Activated naive CD4-positive, alpha-beta T cell treated with anti-CD3 and anti-CD28 coated beads, Interleukin-2, amount 10 ng/mL, durations not matched to agents 7 days and 5 days (primary cell): ENCODE measurements at regions of chr1 and their contacts with region 1.

Region 1: DNA sequence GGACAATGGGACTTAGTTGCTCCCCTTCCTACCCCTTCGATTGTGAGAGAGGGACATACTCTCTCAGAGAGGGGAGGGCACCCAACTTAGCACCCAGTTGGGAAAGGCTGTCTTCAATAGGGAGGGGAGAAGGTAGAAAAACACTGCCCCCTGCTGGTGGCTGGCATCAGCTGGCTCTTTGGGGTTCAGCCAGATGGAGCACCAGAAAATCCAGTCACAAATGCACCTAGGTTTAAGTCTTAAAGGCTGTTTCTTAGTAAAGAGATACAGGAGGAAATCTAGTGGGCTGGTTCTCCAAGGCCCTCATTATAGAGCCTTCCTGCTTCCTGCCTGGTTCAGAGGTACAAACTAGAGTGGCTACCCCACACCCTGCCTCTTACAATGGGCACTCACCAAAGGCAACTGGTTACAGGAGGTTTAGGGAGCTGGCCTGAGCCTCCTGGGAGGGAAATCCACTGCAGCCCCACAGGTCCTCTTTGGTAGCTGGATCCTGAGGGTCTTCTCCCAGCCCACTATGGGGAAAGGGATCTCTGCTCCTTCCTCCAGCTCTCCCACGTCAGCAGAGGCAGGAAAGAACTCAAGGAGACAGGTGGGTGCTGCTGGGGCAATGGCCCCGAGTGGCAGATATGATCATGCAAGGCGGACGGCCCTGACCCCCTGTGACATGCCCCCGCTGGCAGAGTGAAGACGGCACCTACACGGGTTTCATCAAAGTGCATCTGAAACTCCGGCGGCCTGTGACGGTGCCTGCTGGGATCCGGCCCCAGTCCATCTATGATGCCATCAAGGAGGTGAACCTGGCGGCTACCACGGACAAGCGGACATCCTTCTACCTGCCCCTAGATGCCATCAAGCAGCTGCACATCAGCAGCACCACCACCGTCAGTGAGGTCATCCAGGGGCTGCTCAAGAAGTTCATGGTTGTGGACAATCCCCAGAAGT is 28.3 kb downstream of the EIF2D start:
- DNase-seq: peak; percentile 91
- H3K4me3 Mint-ChIP-seq: peak overlapping the region; percentile 56
- H3K27ac Mint-ChIP-seq: peak overlapping the region; percentile 95
- H3K4me1 Mint-ChIP-seq: peaks cover 89% of the 10 kb centered on the region
- H3K27me3 Mint-ChIP-seq: no peaks in the 10 kb centered on the region

Region 2: GRCh38 chr1:206469933-206470691 is 113.9 kb before region 1 on chr1 and contains the start of gene IKBKE:
- CTCF ChIA-PET with region 1: interaction called, 10 read pairs
- DNase-seq: peak; percentile 75
- H3K4me3 Mint-ChIP-seq: peak within 1 kb of the TSS; percentile 72
- H3K27ac Mint-ChIP-seq: peak within 1 kb of the TSS; percentile 67
- H3K4me1 Mint-ChIP-seq: peaks cover 88% of the 10 kb centered on the region
- H3K27me3 Mint-ChIP-seq: no peaks in the 10 kb centered on the region

Region 3: GRCh38 chr1:206489980-206490770 is 93.8 kb before region 1 on chr1:
- CTCF ChIA-PET with region 1: interaction called, 25 read pairs
- DNase-seq: peak; percentile 76
- H3K4me3 Mint-ChIP-seq: no peak overlapping the region
- H3K27ac Mint-ChIP-seq: peak overlapping the region; percentile 1
- H3K4me1 Mint-ChIP-seq: peaks cover 5% of the 10 kb centered on the region
- H3K27me3 Mint-ChIP-seq: no peaks in the 10 kb centered on the region

Region 4: GRCh38 chr1:206544562-206545257 is 39.3 kb before region 1 on chr1:
- CTCF ChIA-PET with region 1: interaction called, 255 read pairs
- DNase-seq: peak; percentile 87
- H3K4me3 Mint-ChIP-seq: no peak overlapping the region
- H3K27ac Mint-ChIP-seq: no peak overlapping the region
- H3K4me1 Mint-ChIP-seq: peaks cover 21% of the 10 kb centered on the region
- H3K27me3 Mint-ChIP-seq: no peaks in the 10 kb centered on the region

Region 5: GRCh38 chr1:206651958-206652890 is 68.2 kb after region 1 on chr1:
- CTCF ChIA-PET with region 1: no interaction called
- DNase-seq: no peak
- H3K4me3 Mint-ChIP-seq: no peak overlapping the region
- H3K27ac Mint-ChIP-seq: no peak overlapping the region
- H3K4me1 Mint-ChIP-seq: no peaks in the 10 kb centered on the region
- H3K27me3 Mint-ChIP-seq: peaks cover 14% of the 10 kb centered on the region